AG04449 (cell line): ENCODE measurements at regions of chr15 and their contacts with region 1.

Region 1: GRCh38 chr15:72473614-72474465 is at the start of gene ARIH1:
- DNase-seq: peak; percentile 73
- H3K4me3 ChIP-seq: peak within 1 kb of the TSS; percentile 97
- CTCF ChIP-seq: peak; percentile 38

Region 2: DNA sequence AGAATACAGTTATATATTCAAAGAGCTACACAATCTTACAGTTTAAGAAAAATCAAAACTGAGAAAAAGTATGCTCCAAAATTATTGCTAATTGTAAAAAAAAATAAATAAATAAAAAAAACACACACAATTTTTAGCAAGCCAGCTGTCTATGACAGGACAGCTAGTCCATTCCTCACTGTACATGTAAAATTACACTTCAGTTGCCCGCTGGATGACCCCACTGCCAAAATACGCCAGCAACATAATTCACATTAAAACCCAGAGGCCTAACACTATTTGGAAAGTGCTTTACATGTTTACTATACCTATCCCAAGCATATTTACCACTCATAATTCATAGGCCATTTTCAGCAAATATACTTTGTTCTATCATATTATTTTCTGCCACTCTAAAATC is 361.7 kb before region 1 on chr15:
- CTCF ChIA-PET with region 1: no interaction called
- POLR2A ChIA-PET with region 1: no interaction called
- DNase-seq: no peak
- H3K4me3 ChIP-seq: no peak overlapping the region
- CTCF ChIP-seq: no peak

Region 3: DNA sequence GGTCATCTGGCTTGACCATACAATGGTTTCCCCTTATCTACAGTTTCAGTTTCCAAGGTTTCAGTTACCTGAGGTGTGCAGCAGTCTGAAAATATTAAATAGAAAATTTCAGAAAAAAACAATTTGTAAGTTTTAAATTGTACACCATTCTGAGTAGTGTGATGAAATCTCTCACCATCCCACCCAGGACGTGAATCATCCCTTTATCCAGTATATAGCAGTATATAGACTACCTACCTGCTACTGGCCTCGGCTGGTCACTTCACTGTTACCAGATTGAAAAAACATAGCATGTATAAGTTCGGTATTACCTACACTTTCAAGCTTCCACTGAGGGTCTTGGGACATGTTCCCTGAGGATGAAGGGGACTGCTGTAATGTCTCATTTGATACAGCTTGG is 12.3 kb after region 1 on chr15:
- CTCF ChIA-PET with region 1: interaction called, 10 read pairs
- POLR2A ChIA-PET with region 1: no interaction called
- DNase-seq: no peak
- H3K4me3 ChIP-seq: no peak overlapping the region
- CTCF ChIP-seq: no peak